Right cardiac atrium (tissue), 5 donors: ENCODE measurements at regions of chr5 and their contacts with region 1.

Region 1: GRCh38 chr5:13987843-13988464 is 43.5 kb upstream of the DNAH5 start:
- DNase-seq: peak in 2 of 3 donors; percentile 28 to 68
- ATAC-seq: peak; percentile 59 to 67
- H3K4me3 ChIP-seq: no peak overlapping the region
- H3K27ac ChIP-seq: no peak overlapping the region
- H3K4me1 ChIP-seq: no peaks in the 10 kb centered on the region
- H3K27me3 ChIP-seq: no peaks in the 10 kb centered on the region

Region 2: GRCh38 chr5:14264604-14265316 is 276.8 kb after region 1 on chr5:
- intact Hi-C with region 1: loop called in 1 of 4 experiments (anchors 10 kb)
- DNase-seq: peak; percentile 92 to 97 (median 96)
- ATAC-seq: peak; percentile 97
- H3K4me3 ChIP-seq: peak overlapping the region; percentile 23
- H3K27ac ChIP-seq: no peak overlapping the region
- H3K4me1 ChIP-seq: peaks cover 18% of the 10 kb centered on the region
- H3K27me3 ChIP-seq: no peaks in the 10 kb centered on the region

Region 3: GRCh38 chr5:14351845-14352712 is 364.1 kb after region 1 on chr5:
- intact Hi-C with region 1: loop called in 1 of 4 experiments (anchors 5 kb)
- DNase-seq: peak; percentile 59 to 86 (median 82)
- ATAC-seq: peak; percentile 88 to 89
- H3K4me3 ChIP-seq: no peak overlapping the region
- H3K27ac ChIP-seq: no peak overlapping the region
- H3K4me1 ChIP-seq: no peaks in the 10 kb centered on the region
- H3K27me3 ChIP-seq: no peaks in the 10 kb centered on the region

Region 4: GRCh38 chr5:14364576-14365472 is 376.9 kb after region 1 on chr5:
- intact Hi-C with region 1: loop called in 2 of 4 experiments (anchors 10 kb)
- DNase-seq: peak in 1 of 3 donors; percentile 50
- ATAC-seq: no peak
- H3K4me3 ChIP-seq: no peak overlapping the region
- H3K27ac ChIP-seq: no peak overlapping the region
- H3K4me1 ChIP-seq: no peaks in the 10 kb centered on the region
- H3K27me3 ChIP-seq: no peaks in the 10 kb centered on the region

Region 5: GRCh38 chr5:14644623-14645237 is 656.8 kb after region 1 on chr5:
- intact Hi-C with region 1: loop called in 3 of 4 experiments (anchors 10 kb)
- DNase-seq: no peak
- ATAC-seq: no peak
- H3K4me3 ChIP-seq: no peak overlapping the region
- H3K27ac ChIP-seq: no peak overlapping the region
- H3K4me1 ChIP-seq: no peaks in the 10 kb centered on the region
- H3K27me3 ChIP-seq: no peaks in the 10 kb centered on the region